GM12878 (cell line): ENCODE measurements at regions of chr3 and their contacts with region 1.

Region 1: GRCh38 chr3:9422712-9423424 is 25.5 kb downstream of the SETD5 start:
- DNase-seq: no peak
- ATAC-seq: peak; percentile 68
- H3K4me3 ChIP-seq: no peak overlapping the region
- H3K27ac ChIP-seq: no peak overlapping the region
- H3K4me1 ChIP-seq: no peaks in the 10 kb centered on the region
- H3K27me3 ChIP-seq: no peaks in the 10 kb centered on the region
- CTCF ChIP-seq: peak; percentile 18 to 45 (median 26); a peak in 4 of 6 replicates
- EP300 ChIP-seq: no peak
- POLR2A ChIP-seq: no peak
- RAD21 ChIP-seq: peak; percentile 53

Region 2: GRCh38 chr3:9402410-9403228 is 20.2 kb before region 1 on chr3:
- CTCF ChIA-PET with region 1: interaction called, 11 read pairs
- POLR2A ChIA-PET with region 1: interaction called, 3 read pairs
- RAD21 ChIA-PET with region 1: interaction called, 8 read pairs
- SMC1A ChIA-PET with region 1: interaction called, 12 read pairs
- in situ Hi-C with region 1: no loop called
- intact Hi-C with region 1: no loop called
- DNase-seq: no peak
- ATAC-seq: peak; percentile 23
- H3K4me3 ChIP-seq: peak overlapping the region; percentile 59
- H3K27ac ChIP-seq: peak overlapping the region; percentile 15; the same call in 1 of the 2 replicates
- H3K4me1 ChIP-seq: peaks cover 5% of the 10 kb centered on the region; the same call in 1 of the 2 replicates
- H3K27me3 ChIP-seq: no peaks in the 10 kb centered on the region
- CTCF ChIP-seq: no peak
- EP300 ChIP-seq: no peak
- POLR2A ChIP-seq: no peak
- RAD21 ChIP-seq: no peak